PC-3 (cell line): ENCODE measurements at regions of chr14 and their contacts with region 1.

Region 1: GRCh38 chr14:52023518-52023917 is 34.2 kb downstream of the RTRAF start:
- DNase-seq: peak; percentile 72
- ATAC-seq: peak; percentile 47
- H3K4me3 ChIP-seq: no peak overlapping the region
- H3K27ac ChIP-seq: no peak overlapping the region; the same call in 1 of the 2 replicates
- H3K4me1 ChIP-seq: peaks cover 27% of the 10 kb centered on the region
- H3K27me3 ChIP-seq: no peaks in the 10 kb centered on the region
- CTCF ChIP-seq: no peak

Region 2: DNA sequence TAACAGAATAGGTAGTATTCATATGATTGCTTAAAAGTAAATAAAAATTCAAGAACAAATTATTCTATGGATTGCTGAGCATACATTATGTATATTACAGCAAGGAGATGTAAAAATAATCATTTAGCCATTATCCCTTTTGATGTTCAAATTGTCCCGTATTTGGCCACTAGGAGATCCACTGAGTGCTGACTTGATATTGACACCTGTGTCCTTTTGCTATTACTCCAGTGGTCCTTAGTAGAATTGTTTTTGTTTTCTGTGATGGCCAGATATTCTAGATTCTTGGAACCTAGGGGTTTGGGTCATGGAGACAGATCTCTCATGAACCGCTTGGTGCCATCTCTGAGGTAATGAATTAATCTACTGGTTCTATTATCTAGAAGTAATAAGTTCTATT is 655.1 kb after region 1 on chr14:
- CTCF ChIA-PET with region 1: no interaction called
- POLR2A ChIA-PET with region 1: interaction called, 10 read pairs
- intact Hi-C with region 1: no loop called
- DNase-seq: peak; percentile 56
- ATAC-seq: peak; percentile 80
- H3K4me3 ChIP-seq: no peak overlapping the region
- H3K27ac ChIP-seq: no peak overlapping the region
- H3K4me1 ChIP-seq: no peaks in the 10 kb centered on the region
- H3K27me3 ChIP-seq: no peaks in the 10 kb centered on the region
- CTCF ChIP-seq: peak; percentile 76